Panc1 (cell line): ENCODE measurements at regions of chr3 and their contacts with region 1.

Region 1: GRCh38 chr3:126618021-126618420 is 36.9 kb downstream of the TXNRD3 start:
- DNase-seq: no peak
- ATAC-seq: no peak
- H3K4me3 ChIP-seq: no peak overlapping the region
- H3K27ac ChIP-seq: no peak overlapping the region
- H3K4me1 ChIP-seq: no peaks in the 10 kb centered on the region
- H3K27me3 ChIP-seq: no peaks in the 10 kb centered on the region
- CTCF ChIP-seq: no peak

Region 2: DNA sequence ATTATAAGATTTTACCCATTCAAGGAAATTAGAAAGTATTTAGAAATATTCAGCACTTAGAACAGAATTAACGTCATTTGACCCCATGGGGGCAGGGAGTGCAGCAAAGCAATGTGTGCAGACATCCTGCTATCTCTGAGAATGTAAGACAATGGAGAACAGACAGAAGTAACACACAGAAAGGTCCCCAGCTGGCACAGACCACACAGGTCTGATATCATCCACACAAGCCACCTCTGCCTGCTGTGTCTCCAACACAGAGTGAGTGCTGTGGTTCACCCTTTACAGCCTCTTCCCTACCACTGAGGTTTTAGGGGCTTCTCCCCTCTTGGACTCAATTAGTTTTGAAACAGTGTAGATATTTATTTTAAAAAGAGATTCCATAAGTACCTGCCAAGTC is 20.8 kb after region 1 on chr3:
- CTCF ChIA-PET with region 1: interaction called, 15 read pairs
- POLR2A ChIA-PET with region 1: no interaction called
- in situ Hi-C with region 1: no loop called
- intact Hi-C with region 1: no loop called
- DNase-seq: no peak
- ATAC-seq: no peak
- H3K4me3 ChIP-seq: no peak overlapping the region
- H3K27ac ChIP-seq: no peak overlapping the region
- H3K4me1 ChIP-seq: no peaks in the 10 kb centered on the region
- H3K27me3 ChIP-seq: no peaks in the 10 kb centered on the region
- CTCF ChIP-seq: no peak

Region 3: DNA sequence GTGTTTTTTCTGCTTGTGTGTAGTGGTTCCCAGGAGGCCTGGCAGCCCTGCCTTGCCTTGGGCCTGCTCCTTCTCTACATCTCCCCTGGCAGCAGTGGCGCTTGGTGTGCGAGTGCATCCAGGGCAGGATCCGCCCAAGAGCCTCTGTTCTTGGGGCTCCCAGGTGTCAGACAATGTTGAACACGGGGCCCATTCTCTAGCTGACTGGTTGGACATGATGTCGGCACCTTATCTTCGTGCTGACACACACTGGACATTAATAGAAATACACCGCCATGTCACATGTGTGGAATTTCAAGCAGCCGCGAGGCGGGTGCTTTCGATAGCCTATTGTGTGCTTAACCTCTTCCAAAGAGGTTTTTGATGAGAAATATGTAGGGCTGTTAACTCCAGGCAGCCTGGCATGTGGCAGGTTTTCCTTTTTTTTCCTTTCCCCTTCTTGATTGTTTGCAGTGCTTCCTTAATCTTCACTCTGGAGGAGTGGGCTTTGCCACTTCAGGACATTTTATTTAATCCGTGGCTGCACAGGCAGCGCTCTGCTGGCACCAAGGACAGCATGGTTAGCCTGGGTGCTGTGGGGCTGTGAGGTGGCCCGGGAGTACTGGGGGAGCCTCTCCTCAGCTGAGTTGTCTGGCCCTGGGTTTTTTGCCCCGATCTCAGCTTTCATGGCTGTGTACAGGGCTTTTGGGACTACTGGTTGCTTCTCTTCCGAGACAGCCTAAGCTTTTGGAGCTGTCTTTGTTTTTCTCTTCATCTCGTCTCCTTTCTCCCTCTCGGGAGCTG is 128.6 kb after region 1 on chr3:
- CTCF ChIA-PET with region 1: no interaction called
- POLR2A ChIA-PET with region 1: no interaction called
- in situ Hi-C with region 1: no loop called
- intact Hi-C with region 1: no loop called
- DNase-seq: no peak
- ATAC-seq: peak; percentile 81
- H3K4me3 ChIP-seq: no peak overlapping the region
- H3K27ac ChIP-seq: no peak overlapping the region
- H3K4me1 ChIP-seq: peaks cover 9% of the 10 kb centered on the region; the same call in 1 of the 2 replicates
- H3K27me3 ChIP-seq: no peaks in the 10 kb centered on the region
- CTCF ChIP-seq: no peak; the same call in 1 of the 2 replicates